GM12878 (cell line): ENCODE measurements at regions of chr17 and their contacts with region 1.

Region 1: DNA sequence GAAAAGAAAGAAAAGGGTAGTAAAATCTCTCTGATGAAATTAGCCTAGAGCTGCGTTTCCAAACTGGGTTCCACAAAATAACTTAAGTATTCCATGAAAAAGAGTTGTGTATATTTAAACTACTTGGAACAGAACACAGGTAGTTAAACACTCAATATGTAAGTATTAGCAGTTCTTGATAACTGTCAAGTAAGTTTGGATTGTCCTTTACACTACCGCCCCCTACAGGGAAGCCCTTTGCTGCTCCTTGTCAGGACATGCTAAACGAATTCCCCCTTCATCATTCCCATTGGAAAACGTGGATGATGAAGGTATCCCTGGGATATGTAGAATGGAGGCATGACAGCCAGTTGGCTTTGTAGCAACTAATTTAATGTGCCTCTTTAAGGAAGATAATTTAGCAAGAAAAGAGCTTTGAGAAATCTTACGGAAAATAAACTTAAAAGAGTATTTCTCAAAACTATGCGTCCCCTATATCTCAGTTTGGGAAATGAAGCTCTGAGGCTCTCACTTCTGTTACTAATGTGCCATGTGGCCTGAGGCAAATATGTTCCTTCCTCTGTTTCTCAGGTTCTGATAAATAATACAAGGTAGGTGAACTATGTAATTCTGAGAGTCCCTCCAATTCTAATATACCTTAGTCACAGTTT is 18.8 kb downstream of the NCBP3 start:
- DNase-seq: no peak
- ATAC-seq: peak; percentile 65
- H3K4me3 ChIP-seq: no peak overlapping the region
- H3K27ac ChIP-seq: no peak overlapping the region
- H3K4me1 ChIP-seq: no peaks in the 10 kb centered on the region
- H3K27me3 ChIP-seq: no peaks in the 10 kb centered on the region
- CTCF ChIP-seq: peak; percentile 82 to 85 (median 82)
- EP300 ChIP-seq: no peak
- POLR2A ChIP-seq: no peak
- RAD21 ChIP-seq: peak; percentile 90

Region 2: GRCh38 chr17:3732210-3732621 is 95.0 kb before region 1 on chr17:
- CTCF ChIA-PET with region 1: interaction called, 371 read pairs
- POLR2A ChIA-PET with region 1: interaction called, 14 read pairs
- RAD21 ChIA-PET with region 1: interaction called, 191 read pairs
- SMC1A ChIA-PET with region 1: interaction called, 255 read pairs
- in situ Hi-C with region 1: loop called (anchors 5 kb)
- intact Hi-C with region 1: loop called (anchors 1 kb)
- DNase-seq: peak; percentile 60
- ATAC-seq: peak; percentile 98
- H3K4me3 ChIP-seq: no peak overlapping the region
- H3K27ac ChIP-seq: no peak overlapping the region
- H3K4me1 ChIP-seq: peaks cover 7% of the 10 kb centered on the region; the same call in 1 of the 2 replicates
- H3K27me3 ChIP-seq: no peaks in the 10 kb centered on the region
- CTCF ChIP-seq: peak; percentile 44 to 62 (median 48); a peak in 4 of 6 replicates
- EP300 ChIP-seq: no peak
- POLR2A ChIP-seq: no peak
- RAD21 ChIP-seq: peak; percentile 60

Region 3: GRCh38 chr17:3762922-3763776 is 64.1 kb before region 1 on chr17:
- CTCF ChIA-PET with region 1: interaction called, 20 read pairs
- POLR2A ChIA-PET with region 1: interaction called, 3 read pairs
- RAD21 ChIA-PET with region 1: interaction called, 5 read pairs
- SMC1A ChIA-PET with region 1: interaction called, 6 read pairs
- in situ Hi-C with region 1: no loop called
- intact Hi-C with region 1: no loop called
- DNase-seq: peak; percentile 89
- ATAC-seq: peak; percentile 93
- H3K4me3 ChIP-seq: no peak overlapping the region
- H3K27ac ChIP-seq: peak overlapping the region; percentile 57
- H3K4me1 ChIP-seq: peaks cover 28% of the 10 kb centered on the region
- H3K27me3 ChIP-seq: no peaks in the 10 kb centered on the region
- CTCF ChIP-seq: no peak
- EP300 ChIP-seq: peak; percentile 92 to 93
- POLR2A ChIP-seq: 0 out of 2 replicates have a peak, but pooled peaks have one; percentile 32
- RAD21 ChIP-seq: 0 out of 2 replicates have a peak, but pooled peaks have one; percentile 1

Region 4: DNA sequence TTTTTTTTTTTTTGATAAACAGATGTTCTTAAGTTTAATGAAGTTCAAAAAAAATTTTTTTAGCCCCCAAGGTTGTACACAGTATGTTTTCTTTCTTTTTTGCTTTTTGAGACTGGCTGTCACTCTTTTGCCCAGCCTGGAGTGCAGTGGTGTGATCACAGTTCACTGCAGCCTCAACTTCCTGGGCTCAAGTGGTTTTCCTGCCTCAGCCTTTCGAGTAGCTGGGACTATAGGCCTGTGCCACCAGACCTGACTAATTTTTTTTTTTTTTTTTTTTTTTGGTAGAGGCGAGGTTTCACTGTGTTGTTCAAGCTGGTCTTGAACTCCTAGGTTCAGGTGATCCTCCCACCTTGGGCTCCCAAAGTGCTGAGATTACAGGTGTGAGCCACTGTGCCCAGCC is 39.0 kb before region 1 on chr17:
- CTCF ChIA-PET with region 1: no interaction called
- POLR2A ChIA-PET with region 1: no interaction called
- RAD21 ChIA-PET with region 1: no interaction called
- SMC1A ChIA-PET with region 1: no interaction called
- in situ Hi-C with region 1: no loop called
- intact Hi-C with region 1: no loop called
- DNase-seq: no peak
- ATAC-seq: peak; percentile 39
- H3K4me3 ChIP-seq: no peak overlapping the region
- H3K27ac ChIP-seq: no peak overlapping the region
- H3K4me1 ChIP-seq: peaks cover 7% of the 10 kb centered on the region; the same call in 1 of the 2 replicates
- H3K27me3 ChIP-seq: no peaks in the 10 kb centered on the region
- CTCF ChIP-seq: no peak
- EP300 ChIP-seq: no peak
- POLR2A ChIP-seq: no peak
- RAD21 ChIP-seq: no peak

Region 5: DNA sequence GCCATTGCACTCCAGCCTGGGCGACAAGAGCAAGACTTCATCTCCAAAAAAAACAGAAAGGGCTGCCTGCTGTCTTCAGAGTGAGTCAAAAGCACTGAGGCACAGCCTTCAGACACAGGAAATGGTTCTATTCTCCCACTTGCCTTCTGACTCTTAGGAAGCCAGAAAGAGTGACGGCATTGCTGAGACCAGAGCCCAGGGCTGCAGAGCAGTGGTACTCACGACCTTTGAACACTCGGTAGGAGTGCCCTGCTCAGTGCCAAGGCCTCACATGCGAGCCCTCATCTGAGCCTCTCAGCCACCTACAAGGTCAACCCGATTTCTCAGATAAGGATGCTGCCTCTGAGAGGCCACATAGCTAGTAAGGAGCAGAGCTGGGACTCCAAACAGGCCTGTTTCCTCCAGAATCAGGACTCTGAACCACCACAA is 22.7 kb before region 1 on chr17:
- CTCF ChIA-PET with region 1: interaction called, 17 read pairs
- POLR2A ChIA-PET with region 1: no interaction called
- RAD21 ChIA-PET with region 1: interaction called, 3 read pairs
- SMC1A ChIA-PET with region 1: interaction called, 9 read pairs
- in situ Hi-C with region 1: no loop called
- intact Hi-C with region 1: no loop called
- DNase-seq: peak; percentile 63
- ATAC-seq: peak; percentile 95
- H3K4me3 ChIP-seq: peak overlapping the region; percentile 28; the same call in 1 of the 2 replicates
- H3K27ac ChIP-seq: peak overlapping the region; percentile 67
- H3K4me1 ChIP-seq: peaks cover 18% of the 10 kb centered on the region
- H3K27me3 ChIP-seq: no peaks in the 10 kb centered on the region
- CTCF ChIP-seq: no peak
- EP300 ChIP-seq: no peak
- POLR2A ChIP-seq: no peak
- RAD21 ChIP-seq: no peak

Region 6: DNA sequence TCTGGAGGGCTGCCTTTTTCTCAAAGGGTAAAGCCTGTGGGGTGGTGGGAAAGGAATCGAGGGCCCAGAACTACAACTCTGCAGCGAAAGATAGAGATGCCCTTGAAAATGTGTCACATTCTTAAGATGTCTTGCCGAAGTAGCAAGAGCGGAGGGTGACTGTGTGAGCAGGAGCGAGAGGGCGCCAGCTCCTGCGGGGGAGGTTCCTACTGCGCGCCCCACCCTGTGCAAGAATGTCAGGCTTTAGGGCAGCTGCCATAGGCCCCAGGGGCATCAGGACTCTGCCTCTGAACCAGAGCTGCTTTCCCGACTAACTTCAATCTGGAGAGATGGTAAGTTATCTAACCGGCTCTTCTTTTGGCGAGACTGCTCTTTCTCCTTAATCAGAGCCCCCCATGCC is 14.5 kb before region 1 on chr17:
- CTCF ChIA-PET with region 1: interaction called, 23 read pairs
- POLR2A ChIA-PET with region 1: no interaction called
- RAD21 ChIA-PET with region 1: interaction called, 6 read pairs
- SMC1A ChIA-PET with region 1: interaction called, 7 read pairs
- in situ Hi-C with region 1: no loop called
- intact Hi-C with region 1: no loop called
- DNase-seq: no peak
- ATAC-seq: no peak
- H3K4me3 ChIP-seq: no peak overlapping the region
- H3K27ac ChIP-seq: no peak overlapping the region
- H3K4me1 ChIP-seq: peaks cover 9% of the 10 kb centered on the region
- H3K27me3 ChIP-seq: no peaks in the 10 kb centered on the region
- CTCF ChIP-seq: no peak
- EP300 ChIP-seq: no peak
- POLR2A ChIP-seq: no peak
- RAD21 ChIP-seq: no peak